CD8-positive, alpha-beta memory T cell (primary cell): ENCODE measurements at regions of chr3 and their contacts with region 1.

Region 1: GRCh38 chr3:185558395-185558794 is 6.0 kb upstream of the LIPH start:
- DNase-seq: no peak
- H3K4me3 ChIP-seq: no peak overlapping the region
- H3K4me3 Mint-ChIP-seq: peak overlapping the region in 1 of 7 donors; percentile 3
- H3K27ac ChIP-seq: peak overlapping the region; percentile 11
- H3K27ac Mint-ChIP-seq: no peak overlapping the region
- H3K4me1 ChIP-seq: no peaks in the 10 kb centered on the region
- H3K4me1 Mint-ChIP-seq: peaks cover 11 to 13% (median 12%) of the 10 kb centered on the region in 3 donors
- H3K27me3 ChIP-seq: no peaks in the 10 kb centered on the region
- H3K27me3 Mint-ChIP-seq: peaks cover 25% of the 10 kb centered on the region in 2 donors

Region 2: GRCh38 chr3:185572183-185572582 is 13.8 kb after region 1 on chr3:
- CTCF ChIA-PET with region 1: interaction called, 25 read pairs
- POLR2A ChIA-PET with region 1: no interaction called
- DNase-seq: no peak
- H3K4me3 ChIP-seq: no peak overlapping the region
- H3K4me3 Mint-ChIP-seq: peak overlapping the region in 1 of 7 donors; percentile 51
- H3K27ac ChIP-seq: no peak overlapping the region
- H3K27ac Mint-ChIP-seq: no peak overlapping the region
- H3K4me1 ChIP-seq: no peaks in the 10 kb centered on the region
- H3K4me1 Mint-ChIP-seq: peaks cover 6% of the 10 kb centered on the region in 3 donors
- H3K27me3 ChIP-seq: no peaks in the 10 kb centered on the region
- H3K27me3 Mint-ChIP-seq: peaks cover 1 to 8% of the 10 kb centered on the region in 2 donors